Activated T-helper 1 cell treated with anti-CD3 and anti-CD28 coated beads, Interleukin-12 subunit alpha, Interleukin-12 subunit beta, Interleukin-2, Interleukin-4 antibody, amounts not matched to agents 30 ng/mL and 10 ng/mL and 1 ng/mL, durations not matched to agents 14 hours and 24 hours and 36 hours (primary cell): ENCODE measurements at regions of chr17 and their contacts with region 1.

Region 1: DNA sequence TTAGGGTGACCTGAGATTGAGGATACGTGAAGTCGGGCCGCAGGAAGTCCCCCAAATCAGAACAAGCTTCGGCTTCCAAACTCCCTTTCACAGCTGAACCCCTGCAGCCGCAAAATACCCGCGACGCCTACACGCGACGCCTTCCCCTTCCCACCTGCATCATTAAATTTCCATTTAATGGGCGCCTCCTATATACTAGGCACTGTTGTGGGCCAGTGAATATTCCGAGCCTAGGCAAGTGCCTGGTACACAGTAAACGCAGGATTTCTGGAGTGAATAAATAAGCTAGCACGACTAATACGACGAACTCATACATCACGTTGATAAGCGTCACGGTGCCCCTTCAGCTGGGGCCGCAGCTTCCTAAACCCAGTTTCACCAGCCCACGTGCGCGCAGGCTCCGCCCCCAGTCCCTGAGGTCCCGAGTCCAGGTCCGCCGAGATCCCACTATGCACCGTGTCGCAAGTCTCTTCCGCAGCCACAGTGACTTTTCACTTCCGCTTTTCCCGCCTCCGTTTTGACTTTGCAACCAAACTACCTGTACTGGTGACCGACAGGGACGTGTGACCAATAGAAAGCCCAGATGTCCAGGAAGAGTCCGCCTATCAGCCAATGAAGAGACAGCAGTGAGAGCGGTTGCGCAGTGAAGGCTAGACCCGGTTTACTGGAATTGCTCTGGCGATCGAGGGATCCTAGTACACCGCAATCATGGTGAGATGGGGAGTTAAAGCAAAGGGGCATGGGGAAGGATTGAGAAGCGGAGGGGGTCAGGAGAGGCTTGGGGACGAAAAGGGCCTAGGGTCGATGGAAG is at the start of gene PSMB3:
- DNase-seq: peak; percentile 97
- H3K4me3 Mint-ChIP-seq: peak within 1 kb of the TSS; percentile 97
- H3K27ac Mint-ChIP-seq: peak within 1 kb of the TSS; percentile 98
- H3K4me1 Mint-ChIP-seq: peaks cover 35% of the 10 kb centered on the region
- H3K27me3 Mint-ChIP-seq: peaks cover 14% of the 10 kb centered on the region
- total RNA-seq, gene PSMB3: 349 and 366 TPM in 2 replicates

Region 2: DNA sequence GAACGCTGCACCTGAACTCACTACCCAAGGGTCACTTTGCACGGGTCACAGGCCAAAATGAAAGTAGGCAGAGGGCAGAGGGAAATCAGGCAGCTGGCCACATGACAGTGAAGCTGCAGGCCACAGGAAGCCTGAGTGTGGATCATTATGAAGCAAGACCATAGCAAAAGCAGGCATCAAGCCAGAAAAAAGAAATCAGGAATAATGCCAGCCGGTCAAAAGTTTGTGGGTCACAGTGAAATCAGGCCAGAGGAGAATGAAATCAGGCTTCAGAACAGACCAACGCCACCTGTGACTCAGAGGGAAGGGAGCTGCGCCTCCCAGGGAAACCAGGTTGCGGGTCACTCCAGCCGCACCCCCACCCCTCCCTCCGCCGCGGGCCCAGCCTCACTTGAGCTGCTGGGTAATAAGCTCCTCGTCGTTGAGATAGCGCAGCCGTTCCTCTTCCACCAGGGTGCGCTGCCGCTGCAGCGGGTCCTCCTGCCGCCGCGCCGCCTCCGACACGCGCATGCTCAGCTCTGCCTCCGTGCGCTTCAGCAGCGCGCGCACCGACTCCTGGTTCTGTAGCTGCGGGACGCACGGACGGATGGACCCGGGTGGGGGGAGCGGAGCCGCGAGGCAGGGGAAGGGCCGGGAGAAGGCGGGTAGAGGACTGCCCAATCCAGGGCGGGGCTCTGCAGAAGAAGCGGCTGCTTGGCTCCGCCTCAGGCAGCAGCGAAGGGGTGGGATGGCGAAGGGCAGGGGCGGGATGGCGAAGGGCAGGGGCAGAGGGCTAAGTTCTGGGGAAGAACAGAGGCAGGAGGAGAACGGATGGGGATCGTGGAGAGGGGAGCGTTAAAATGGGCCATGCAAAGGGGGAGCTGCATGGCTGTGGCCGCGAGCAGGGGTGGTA is 194.2 kb before region 1 on chr17:
- intact Hi-C with region 1: loop called (anchors 2 kb)
- DNase-seq: peak; percentile 87
- H3K4me3 Mint-ChIP-seq: peak overlapping the region; percentile 95
- H3K27ac Mint-ChIP-seq: peak overlapping the region; percentile 69
- H3K4me1 Mint-ChIP-seq: peaks cover 27% of the 10 kb centered on the region
- H3K27me3 Mint-ChIP-seq: peaks cover 48% of the 10 kb centered on the region

Region 3: DNA sequence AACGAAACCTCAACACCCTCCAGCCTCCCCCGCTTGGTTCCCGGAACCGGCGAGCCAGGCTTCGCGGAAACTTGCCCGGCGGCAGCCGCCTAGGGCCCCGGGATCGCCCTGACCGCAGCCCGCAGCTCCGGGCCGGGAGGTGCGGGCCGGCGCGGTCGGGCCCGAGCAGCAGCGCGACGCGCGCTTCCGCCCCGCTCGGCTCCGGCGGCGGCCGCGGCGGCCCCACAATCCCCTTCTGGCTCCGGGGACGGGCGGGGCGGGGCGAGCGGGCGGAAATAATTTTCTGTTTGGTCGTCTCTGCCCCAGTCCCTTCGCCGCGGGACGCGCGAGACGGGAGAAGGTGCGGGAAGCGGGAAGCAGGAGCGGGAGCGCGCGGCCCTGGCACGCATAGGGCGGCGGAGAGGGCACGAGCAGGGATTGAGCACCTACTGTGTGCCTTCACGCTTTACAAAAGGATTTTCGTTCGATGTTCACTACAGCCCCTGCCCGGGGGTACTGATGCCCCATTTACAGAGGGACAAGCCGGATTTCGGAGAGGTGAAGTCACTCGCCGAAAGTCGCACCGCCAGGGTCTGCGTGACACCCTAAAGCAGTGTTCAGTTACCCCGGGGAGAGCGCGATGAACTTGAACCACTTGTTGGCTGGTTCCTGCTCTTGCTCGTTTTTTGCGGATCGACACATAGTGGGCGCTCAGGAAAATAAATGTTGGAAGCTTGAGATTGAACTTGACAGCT is 50.0 kb before region 1 on chr17:
- intact Hi-C with region 1: loop called (anchors 1 kb)
- DNase-seq: peak; percentile 75
- H3K4me3 Mint-ChIP-seq: peak overlapping the region; percentile 97
- H3K27ac Mint-ChIP-seq: peak overlapping the region; percentile 99
- H3K4me1 Mint-ChIP-seq: peaks cover 65% of the 10 kb centered on the region
- H3K27me3 Mint-ChIP-seq: no peaks in the 10 kb centered on the region

Region 4: DNA sequence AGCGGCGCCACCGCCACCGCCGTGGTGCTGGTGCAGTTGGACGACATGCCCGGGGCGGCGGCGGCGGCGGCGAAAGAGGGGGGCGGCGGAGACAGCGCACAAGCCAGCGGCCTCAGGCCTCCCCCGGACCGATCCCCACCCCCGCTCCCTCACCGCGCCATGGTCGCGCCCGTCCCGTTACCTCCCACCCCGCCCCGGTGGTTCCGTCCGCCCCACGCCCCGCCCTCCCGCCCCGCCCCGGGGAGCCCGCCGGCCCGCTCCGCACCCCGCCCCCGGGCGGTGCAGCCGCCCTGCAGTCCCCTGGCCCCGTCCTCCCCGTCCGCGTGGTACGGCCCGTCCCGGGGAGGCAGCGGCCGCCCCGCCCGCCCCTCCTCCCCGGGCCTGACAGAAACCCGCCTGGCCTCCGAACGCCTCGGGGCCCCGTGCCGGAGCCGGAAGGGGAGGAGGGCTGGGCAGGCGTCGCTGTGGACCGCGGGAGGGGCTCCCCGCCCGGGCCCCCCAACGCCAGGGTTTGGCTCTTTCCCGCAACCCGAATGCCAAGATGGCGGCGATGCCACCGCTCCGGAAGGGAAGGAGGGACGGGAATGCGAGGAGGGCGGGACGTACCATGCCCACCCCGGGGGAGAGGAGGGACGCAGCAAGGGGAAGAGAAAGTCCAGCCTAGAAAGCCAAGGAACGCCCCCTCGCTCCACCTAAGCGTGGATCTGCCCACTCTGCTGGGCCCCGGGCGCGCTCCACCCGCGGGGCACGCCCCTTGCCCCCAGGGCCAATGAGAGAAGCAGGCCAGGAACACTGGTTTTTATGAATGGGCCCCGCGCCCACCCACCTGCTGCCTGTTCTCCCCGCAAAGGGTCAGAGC is 47.3 kb after region 1 on chr17 and contains the start of gene PIP4K2B:
- intact Hi-C with region 1: loop called (anchors 1 kb)
- DNase-seq: peak; percentile 85
- H3K4me3 Mint-ChIP-seq: peak within 1 kb of the TSS; percentile 93
- H3K27ac Mint-ChIP-seq: peak within 1 kb of the TSS; percentile 93
- H3K4me1 Mint-ChIP-seq: peaks cover 33% of the 10 kb centered on the region
- H3K27me3 Mint-ChIP-seq: no peaks in the 10 kb centered on the region
- total RNA-seq, gene PIP4K2B: 40.6 and 40.8 TPM in 2 replicates

Region 5: GRCh38 chr17:39153599-39154051 is 401.3 kb after region 1 on chr17:
- intact Hi-C with region 1: loop called (anchors 1 kb)
- DNase-seq: peak; percentile 88
- H3K4me3 Mint-ChIP-seq: peak overlapping the region; percentile 98
- H3K27ac Mint-ChIP-seq: peak overlapping the region; percentile 98
- H3K4me1 Mint-ChIP-seq: peaks cover 29% of the 10 kb centered on the region
- H3K27me3 Mint-ChIP-seq: peaks cover 45% of the 10 kb centered on the region

Region 6: GRCh38 chr17:39252788-39253460 is 500.6 kb after region 1 on chr17:
- intact Hi-C with region 1: no loop called
- DNase-seq: no peak
- H3K4me3 Mint-ChIP-seq: no peak overlapping the region
- H3K27ac Mint-ChIP-seq: no peak overlapping the region
- H3K4me1 Mint-ChIP-seq: no peaks in the 10 kb centered on the region
- H3K27me3 Mint-ChIP-seq: no peaks in the 10 kb centered on the region

Region 7: DNA sequence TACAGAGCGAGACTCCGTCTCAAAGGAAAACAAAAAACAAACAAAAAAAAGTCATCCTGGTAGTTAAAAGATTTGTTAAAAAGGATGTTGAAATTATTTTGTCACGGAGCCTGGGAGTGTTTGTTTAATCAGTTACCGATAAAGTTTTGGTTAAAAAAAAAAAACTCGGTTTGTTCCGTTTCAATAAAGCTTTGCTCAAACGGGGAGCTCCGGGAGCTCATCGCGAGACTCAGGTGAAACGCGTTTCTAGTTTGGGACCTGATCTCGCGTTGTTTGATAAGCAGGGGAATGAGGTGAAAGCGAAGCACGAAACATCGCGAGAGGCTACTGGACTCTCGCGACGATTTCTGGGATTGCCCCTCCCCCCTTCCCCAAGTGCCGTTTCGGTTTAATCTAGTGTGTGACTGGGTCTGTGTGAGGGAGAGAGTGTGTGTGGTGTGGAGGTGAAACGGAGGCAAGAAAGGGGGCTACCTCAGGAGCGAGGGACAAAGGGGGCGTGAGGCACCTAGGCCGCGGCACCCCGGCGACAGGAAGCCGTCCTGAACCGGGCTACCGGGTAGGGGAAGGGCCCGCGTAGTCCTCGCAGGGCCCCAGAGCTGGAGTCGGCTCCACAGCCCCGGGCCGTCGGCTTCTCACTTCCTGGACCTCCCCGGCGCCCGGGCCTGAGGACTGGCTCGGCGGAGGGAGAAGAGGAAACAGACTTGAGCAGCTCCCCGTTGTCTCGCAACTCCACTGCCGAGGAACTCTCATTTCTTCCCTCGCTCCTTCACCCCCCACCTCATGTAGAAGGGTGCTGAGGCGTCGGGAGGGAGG is 709.0 kb after region 1 on chr17 and contains the start of gene CDK12:
- intact Hi-C with region 1: loop called (anchors 1 kb)
- DNase-seq: peak; percentile 94
- H3K4me3 Mint-ChIP-seq: peak within 1 kb of the TSS; percentile 95
- H3K27ac Mint-ChIP-seq: peak within 1 kb of the TSS; percentile 98
- H3K4me1 Mint-ChIP-seq: peaks cover 44% of the 10 kb centered on the region
- H3K27me3 Mint-ChIP-seq: no peaks in the 10 kb centered on the region
- total RNA-seq, gene CDK12: 97.4 and 99.5 TPM in 2 replicates